ENCODE measurements at regions of chr7 and their contacts with region 1.

Region 1: GRCh38 chr7:39894904-39895303 is 55.2 kb upstream of the CDK13 start:
- DNase-seq: no peak
- ATAC-seq: no peak
- H3K4me3 ChIP-seq: no peak overlapping the region
- H3K27ac ChIP-seq: no peak overlapping the region
- H3K4me1 ChIP-seq: peaks cover 0 to 8% of the 10 kb centered on the region in 2 donors
- H3K27me3 ChIP-seq: peaks cover 0 to 9% of the 10 kb centered on the region in 2 donors
- CTCF ChIP-seq: no peak

Region 2: GRCh38 chr7:40033826-40034225 is 138.9 kb after region 1 on chr7:
- intact Hi-C with region 1: no loop called
- DNase-seq: no peak
- ATAC-seq: no peak
- H3K4me3 ChIP-seq: no peak overlapping the region
- H3K27ac ChIP-seq: no peak overlapping the region
- H3K4me1 ChIP-seq: no peaks in the 10 kb centered on the region
- H3K27me3 ChIP-seq: no peaks in the 10 kb centered on the region
- CTCF ChIP-seq: no peak

Region 3: GRCh38 chr7:40057292-40057691 is 162.4 kb after region 1 on chr7:
- intact Hi-C with region 1: loop called in 1 of 2 experiments (anchors 5 kb)
- DNase-seq: peak in 2 of 4 donors; percentile 16 to 59
- ATAC-seq: peak; percentile 91
- H3K4me3 ChIP-seq: no peak overlapping the region
- H3K27ac ChIP-seq: no peak overlapping the region
- H3K4me1 ChIP-seq: peaks cover 0 to 9% of the 10 kb centered on the region in 2 donors
- H3K27me3 ChIP-seq: no peaks in the 10 kb centered on the region
- CTCF ChIP-seq: no peak